PC-9 (cell line): ENCODE measurements at regions of chr16 and their contacts with region 1.

Region 1: GRCh38 chr16:117379-118365 is 20.8 kb downstream of the NPRL3 start:
- DNase-seq: peak; percentile 58 to 83
- H3K4me3 ChIP-seq: no peak overlapping the region
- H3K27ac ChIP-seq: no peak overlapping the region
- H3K4me1 ChIP-seq: peaks cover 15% of the 10 kb centered on the region
- H3K27me3 ChIP-seq: no peaks in the 10 kb centered on the region
- CTCF ChIP-seq: peak; percentile 87

Region 2: GRCh38 chr16:138049-138417 is 20.4 kb after region 1 on chr16:
- CTCF ChIA-PET with region 1: interaction called, 15 read pairs
- POLR2A ChIA-PET with region 1: no interaction called
- intact Hi-C with region 1: no loop called
- DNase-seq: peak in 1 of 2 experiments; percentile 28
- H3K4me3 ChIP-seq: peak overlapping the region; percentile 88
- H3K27ac ChIP-seq: peak overlapping the region; percentile 66
- H3K4me1 ChIP-seq: peaks cover 7% of the 10 kb centered on the region; the same call in 1 of the 2 replicates
- H3K27me3 ChIP-seq: no peaks in the 10 kb centered on the region
- CTCF ChIP-seq: no peak